HAP-1 (cell line): ENCODE measurements at regions of chr14 and their contacts with region 1.

Region 1: DNA sequence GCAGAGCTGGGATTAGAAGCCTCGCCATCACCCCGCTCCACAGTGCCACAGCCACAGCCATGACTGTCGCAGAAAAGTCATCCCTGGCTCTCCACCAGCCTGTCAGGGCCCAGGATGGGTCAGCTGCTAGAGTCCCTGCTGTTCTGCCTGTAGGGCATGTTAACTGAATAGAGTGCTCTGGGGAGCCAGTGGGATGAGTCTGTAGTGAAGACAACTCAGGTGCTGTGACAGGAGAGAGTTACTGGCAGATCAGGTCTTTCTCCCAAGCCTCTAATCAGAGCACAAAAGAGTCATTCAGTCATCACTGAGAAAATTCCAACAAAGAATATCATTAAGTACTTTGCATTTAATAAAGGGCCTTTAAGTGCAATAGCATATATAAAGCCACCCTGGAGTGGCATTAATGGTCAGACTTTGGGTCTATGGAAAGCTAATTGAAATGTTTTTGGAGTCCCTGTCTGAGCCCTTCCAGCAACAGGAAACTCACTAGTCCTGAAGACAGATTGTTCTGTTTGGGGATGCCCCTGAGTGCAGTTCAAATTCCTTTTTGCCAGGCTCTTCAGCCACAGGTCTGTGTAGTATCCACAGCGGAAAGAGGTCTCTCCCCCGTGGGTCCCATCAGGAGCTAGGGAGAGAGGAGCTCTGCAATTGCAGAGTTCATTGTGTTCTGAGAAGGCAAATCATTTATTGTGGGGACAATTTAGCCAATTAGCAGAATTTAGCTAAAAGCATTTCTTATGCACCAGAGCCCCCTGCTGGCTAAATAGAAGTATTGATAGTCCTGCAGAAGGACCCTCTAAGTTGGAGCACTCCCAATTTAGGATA is 45.2 kb upstream of the C14orf132 start:
- DNase-seq: peak; percentile 69 to 78
- H3K4me3 ChIP-seq: no peak overlapping the region
- H3K4me1 ChIP-seq: peaks cover 17% of the 10 kb centered on the region
- H3K27me3 ChIP-seq: peaks cover 10% of the 10 kb centered on the region

Region 2: GRCh38 chr14:95442633-95443021 is 551.4 kb before region 1 on chr14:
- in situ Hi-C with region 1: loop called (anchors 25 kb)
- DNase-seq: peak; percentile 51 to 83
- H3K4me3 ChIP-seq: no peak overlapping the region
- H3K4me1 ChIP-seq: no peaks in the 10 kb centered on the region
- H3K27me3 ChIP-seq: no peaks in the 10 kb centered on the region

Region 3: DNA sequence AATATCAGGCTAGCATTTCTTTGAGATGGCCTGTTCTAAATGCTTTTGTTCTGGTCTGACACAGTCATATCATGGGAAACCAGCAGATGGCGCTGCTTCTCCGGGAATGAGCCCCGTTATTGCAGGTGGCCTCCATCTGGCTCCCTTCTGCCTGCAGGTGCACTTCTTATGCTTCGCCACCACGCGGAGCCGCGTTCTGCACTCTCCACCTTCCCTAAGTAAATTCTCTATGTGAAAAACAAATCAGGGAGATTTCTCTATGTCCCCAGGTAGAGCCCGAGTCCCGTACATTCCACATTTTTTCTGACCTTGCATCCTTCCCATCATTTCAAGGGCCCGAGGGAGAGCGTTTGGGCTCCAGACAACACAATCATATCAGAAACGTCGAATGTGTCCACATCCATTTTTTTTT is 433.0 kb before region 1 on chr14:
- in situ Hi-C with region 1: loop called (anchors 5 kb)
- DNase-seq: peak; percentile 90 to 95
- H3K4me3 ChIP-seq: no peak overlapping the region
- H3K4me1 ChIP-seq: peaks cover 7% of the 10 kb centered on the region
- H3K27me3 ChIP-seq: no peaks in the 10 kb centered on the region

Region 4: DNA sequence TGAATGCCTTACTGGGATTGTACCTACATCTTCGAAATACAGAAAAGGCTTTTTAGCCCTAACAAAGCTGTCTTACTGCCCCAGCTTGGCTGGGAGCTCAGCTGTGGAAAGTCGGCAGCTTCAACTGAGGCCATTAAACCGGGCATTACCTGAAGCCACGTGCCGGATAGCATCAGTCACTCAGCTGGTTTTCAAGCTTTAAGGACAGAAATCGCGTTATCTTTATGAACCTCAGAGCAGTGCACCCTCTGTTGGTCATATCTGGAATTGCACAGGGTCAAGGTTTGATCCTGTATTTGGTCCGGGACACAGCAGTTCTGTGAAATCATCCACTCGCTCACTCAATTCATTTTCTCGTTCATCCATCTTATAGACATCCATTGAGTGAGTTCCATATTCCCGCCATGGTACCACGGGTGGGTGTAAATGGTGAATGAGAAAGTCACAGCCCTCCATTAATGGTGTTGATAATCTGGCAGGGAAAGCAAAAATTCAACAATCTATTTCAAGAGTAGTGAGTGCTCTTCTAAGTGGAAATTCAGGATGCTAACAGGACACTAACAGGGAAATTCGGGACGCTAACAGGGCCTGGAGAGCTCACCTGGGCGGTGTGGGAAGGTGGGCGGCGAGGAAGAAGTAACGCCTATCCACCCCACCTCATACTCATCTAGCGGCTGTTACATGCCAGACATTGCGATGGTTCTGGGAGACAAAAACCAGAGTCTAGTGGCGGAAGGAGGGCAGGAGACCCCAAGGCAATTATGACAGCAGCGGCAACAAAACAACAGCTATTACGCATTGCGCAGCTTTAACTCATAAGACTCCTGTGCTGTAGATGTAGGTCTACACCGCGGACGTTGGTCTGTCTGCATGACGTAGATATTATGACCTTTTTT is 219.5 kb before region 1 on chr14:
- in situ Hi-C with region 1: loop called (anchors 10 kb)
- DNase-seq: peak; percentile 45 to 79
- H3K4me3 ChIP-seq: no peak overlapping the region
- H3K4me1 ChIP-seq: no peaks in the 10 kb centered on the region
- H3K27me3 ChIP-seq: no peaks in the 10 kb centered on the region

Region 5: DNA sequence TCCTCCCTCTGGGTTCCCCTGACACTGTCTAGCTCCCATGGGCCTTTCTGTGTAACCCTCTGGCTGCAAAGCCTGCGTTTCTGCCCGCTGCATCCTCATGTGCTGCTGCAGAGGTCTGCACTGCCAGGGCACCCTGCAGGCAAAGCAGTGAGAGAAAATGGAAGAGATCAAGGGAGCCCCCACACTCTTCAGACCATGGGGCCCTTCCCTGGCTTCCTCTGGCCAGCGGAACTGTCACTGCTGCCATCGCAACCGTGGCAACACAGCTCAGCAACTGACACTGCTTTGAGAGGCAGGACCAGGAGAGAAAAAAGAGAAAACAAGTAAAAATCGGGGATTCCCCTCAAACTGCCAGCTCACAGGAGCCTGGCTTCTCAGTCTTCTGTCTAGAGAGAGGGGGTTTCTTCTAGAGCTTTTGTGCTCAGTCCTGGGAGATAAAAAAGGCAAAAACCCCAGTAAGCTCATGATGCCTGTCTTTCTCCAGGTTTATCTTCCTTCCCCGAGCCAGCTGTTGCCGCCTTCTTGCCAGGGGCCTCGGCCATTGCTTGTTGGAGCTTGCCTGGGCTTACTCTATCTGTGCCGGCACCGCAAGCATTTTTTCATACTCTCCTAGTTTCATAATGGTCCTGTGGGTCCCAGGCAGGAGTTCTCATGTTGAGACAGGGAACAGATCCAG is 84.1 kb after region 1 on chr14:
- in situ Hi-C with region 1: no loop called
- DNase-seq: no peak
- H3K4me3 ChIP-seq: no peak overlapping the region
- H3K4me1 ChIP-seq: no peaks in the 10 kb centered on the region
- H3K27me3 ChIP-seq: peaks cover 9% of the 10 kb centered on the region

Region 6: GRCh38 chr14:96100161-96101029 is 106.4 kb after region 1 on chr14:
- in situ Hi-C with region 1: loop called (anchors 5 kb)
- DNase-seq: peak; percentile 61 to 89
- H3K4me3 ChIP-seq: no peak overlapping the region
- H3K4me1 ChIP-seq: no peaks in the 10 kb centered on the region
- H3K27me3 ChIP-seq: no peaks in the 10 kb centered on the region